CD8-positive, alpha-beta T cell (primary cell): ENCODE measurements at regions of chr2 and their contacts with region 1.

Region 1: DNA sequence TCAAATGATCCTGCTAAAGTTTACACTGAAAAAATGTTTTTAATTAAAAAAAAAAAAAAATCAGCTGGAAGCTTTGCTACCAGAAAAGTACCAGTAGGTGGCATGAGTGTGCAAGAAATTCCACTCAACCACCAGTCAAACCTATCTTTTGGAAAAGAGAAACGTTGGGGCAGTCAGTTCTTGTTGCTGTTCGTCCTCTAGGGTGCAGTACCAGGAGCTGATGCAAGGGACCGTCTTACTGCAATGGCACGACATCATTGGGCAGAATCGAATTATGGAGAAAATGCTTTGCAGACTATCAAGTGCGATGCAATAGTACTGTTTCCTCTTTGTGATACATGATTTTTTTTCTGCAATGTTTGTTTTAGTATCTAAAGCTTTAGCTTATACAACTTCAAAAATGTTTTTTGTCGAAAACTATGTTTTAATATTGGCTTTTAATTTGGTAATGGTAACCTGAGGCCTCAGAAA is 18.3 kb downstream of the YPEL5 start:
- DNase-seq: peak in 8 of 9 experiments; percentile 28 to 90 (median 60)
- ATAC-seq: peak; percentile 83
- H3K4me3 ChIP-seq: no peak overlapping the region
- H3K4me3 Mint-ChIP-seq: no peak overlapping the region
- H3K27ac ChIP-seq: no peak overlapping the region
- H3K27ac Mint-ChIP-seq: no peak overlapping the region
- H3K4me1 ChIP-seq: no peaks in the 10 kb centered on the region
- H3K4me1 Mint-ChIP-seq: peaks cover 5% of the 10 kb centered on the region
- H3K27me3 ChIP-seq: no peaks in the 10 kb centered on the region
- H3K27me3 Mint-ChIP-seq: no peaks in the 10 kb centered on the region
- CTCF ChIP-seq: peak; percentile 93

Region 2: GRCh38 chr2:30146438-30147147 is 18.5 kb before region 1 on chr2 and contains the start of gene YPEL5:
- CTCF ChIA-PET with region 1: interaction called, 83 read pairs
- POLR2A ChIA-PET with region 1: interaction called, 41 read pairs
- intact Hi-C with region 1: no loop called
- DNase-seq: peak; percentile 99 to 100 (median 100)
- ATAC-seq: peak; percentile 82
- H3K4me3 ChIP-seq: peak within 1 kb of the TSS; percentile 75 to 76
- H3K4me3 Mint-ChIP-seq: peak within 1 kb of the TSS; percentile 89
- H3K27ac ChIP-seq: peak within 1 kb of the TSS; percentile 97 to 100
- H3K27ac Mint-ChIP-seq: peak within 1 kb of the TSS; percentile 100
- H3K4me1 ChIP-seq: peaks cover 50% of the 10 kb centered on the region
- H3K4me1 Mint-ChIP-seq: peaks cover 60% of the 10 kb centered on the region
- H3K27me3 ChIP-seq: no peaks in the 10 kb centered on the region
- H3K27me3 Mint-ChIP-seq: no peaks in the 10 kb centered on the region
- CTCF ChIP-seq: no peak
- total RNA-seq, gene YPEL5: 1,051 to 1,071 TPM

Region 3: DNA sequence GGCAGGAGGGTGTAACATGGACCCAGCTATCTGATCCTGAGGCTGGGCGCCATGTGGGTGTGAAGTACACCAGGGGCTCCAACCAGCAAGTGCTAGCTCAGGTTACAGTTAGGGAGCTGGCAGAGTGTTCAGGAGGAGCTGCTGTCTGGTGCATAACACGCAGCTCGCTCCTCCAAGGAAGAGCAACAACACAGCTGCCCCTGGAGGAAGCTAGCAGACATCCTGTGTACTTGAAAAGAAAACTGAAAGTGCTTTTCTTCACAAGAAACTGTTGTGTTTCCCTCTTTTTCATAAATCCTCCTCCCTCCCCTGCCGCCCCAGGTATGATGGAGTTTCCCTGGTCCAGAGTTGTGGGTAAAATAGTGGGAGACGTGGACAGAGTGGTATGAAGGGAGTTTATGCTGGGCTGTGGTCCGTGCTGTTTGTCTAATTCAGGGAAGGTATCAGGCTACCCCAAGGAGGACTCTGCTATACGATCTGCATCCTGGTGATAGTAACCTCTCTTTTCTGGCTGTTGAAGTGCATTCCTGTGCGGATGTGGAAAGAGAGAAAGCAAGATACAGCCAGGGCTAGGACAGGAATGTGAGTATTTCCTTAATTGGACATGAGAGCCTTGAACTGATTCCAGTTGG is 60.2 kb after region 1 on chr2:
- CTCF ChIA-PET with region 1: interaction called, 22 read pairs
- POLR2A ChIA-PET with region 1: interaction called, 5 read pairs
- intact Hi-C with region 1: loop called (anchors 5 kb)
- DNase-seq: peak in 8 of 9 experiments; percentile 37 to 86 (median 57)
- ATAC-seq: peak; percentile 68
- H3K4me3 ChIP-seq: peak overlapping the region; percentile 59 to 61
- H3K4me3 Mint-ChIP-seq: peak overlapping the region; percentile 99
- H3K27ac ChIP-seq: peak overlapping the region; percentile 78 to 93
- H3K27ac Mint-ChIP-seq: peak overlapping the region; percentile 100
- H3K4me1 ChIP-seq: peaks cover 76% of the 10 kb centered on the region
- H3K4me1 Mint-ChIP-seq: peaks cover 83% of the 10 kb centered on the region
- H3K27me3 ChIP-seq: no peaks in the 10 kb centered on the region
- H3K27me3 Mint-ChIP-seq: no peaks in the 10 kb centered on the region
- CTCF ChIP-seq: no peak

Region 4: GRCh38 chr2:30239308-30239985 is 74.4 kb after region 1 on chr2:
- CTCF ChIA-PET with region 1: interaction called, 26 read pairs
- POLR2A ChIA-PET with region 1: interaction called, 6 read pairs
- intact Hi-C with region 1: loop called (anchors 5 kb)
- DNase-seq: peak; percentile 48 to 91 (median 79)
- ATAC-seq: peak; percentile 73
- H3K4me3 ChIP-seq: peak overlapping the region; percentile 11 to 39
- H3K4me3 Mint-ChIP-seq: peak overlapping the region; percentile 94
- H3K27ac ChIP-seq: peak overlapping the region; percentile 24 to 60
- H3K27ac Mint-ChIP-seq: peak overlapping the region; percentile 96
- H3K4me1 ChIP-seq: peaks cover 90% of the 10 kb centered on the region
- H3K4me1 Mint-ChIP-seq: peaks cover 88% of the 10 kb centered on the region
- H3K27me3 ChIP-seq: no peaks in the 10 kb centered on the region
- H3K27me3 Mint-ChIP-seq: no peaks in the 10 kb centered on the region
- CTCF ChIP-seq: peak; percentile 95

Region 5: GRCh38 chr2:30472326-30472725 is 307.2 kb after region 1 on chr2:
- CTCF ChIA-PET with region 1: interaction called, 12 read pairs
- POLR2A ChIA-PET with region 1: interaction called, 3 read pairs
- intact Hi-C with region 1: loop called (anchors 1 to 5 kb)
- DNase-seq: no peak
- ATAC-seq: no peak
- H3K4me3 ChIP-seq: no peak overlapping the region
- H3K4me3 Mint-ChIP-seq: no peak overlapping the region
- H3K27ac ChIP-seq: no peak overlapping the region
- H3K27ac Mint-ChIP-seq: no peak overlapping the region
- H3K4me1 ChIP-seq: peaks cover 14% of the 10 kb centered on the region
- H3K4me1 Mint-ChIP-seq: peaks cover 49% of the 10 kb centered on the region
- H3K27me3 ChIP-seq: no peaks in the 10 kb centered on the region
- H3K27me3 Mint-ChIP-seq: no peaks in the 10 kb centered on the region
- CTCF ChIP-seq: no peak

Region 6: DNA sequence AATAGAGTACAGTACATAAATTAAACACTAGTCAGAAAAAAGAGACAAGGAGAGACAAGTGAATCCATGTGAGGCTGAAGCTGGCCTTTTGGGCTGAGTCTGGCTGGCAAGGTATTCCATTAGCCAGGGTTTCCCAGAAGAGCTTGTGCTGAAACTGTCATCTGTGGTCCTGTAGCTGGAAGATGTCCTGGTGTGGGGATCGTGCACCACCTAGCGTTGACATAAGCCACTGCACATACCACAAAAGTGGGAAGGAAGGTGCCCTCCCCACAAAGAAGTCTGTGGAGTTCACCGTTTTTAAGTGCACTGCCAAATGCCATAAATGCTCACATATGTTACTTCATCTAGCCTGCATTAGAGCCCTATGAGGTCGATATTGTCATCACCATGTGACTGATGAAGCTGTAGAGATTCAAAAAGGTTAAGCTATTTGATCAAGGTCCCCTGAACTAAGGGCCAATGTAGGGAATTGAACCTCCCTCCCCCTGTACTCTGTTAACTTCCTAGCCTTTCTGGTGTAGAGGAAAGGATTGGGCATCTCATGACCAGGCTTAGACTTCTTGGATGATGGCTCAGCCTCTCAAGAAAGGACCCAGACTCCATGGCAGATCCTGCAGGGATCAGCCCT is 1005.1 kb after region 1 on chr2:
- CTCF ChIA-PET with region 1: interaction called, 8 read pairs
- POLR2A ChIA-PET with region 1: no interaction called
- intact Hi-C with region 1: loop called in 1 of 2 experiments (anchors 10 kb)
- DNase-seq: peak in 8 of 9 experiments; percentile 18 to 69 (median 40)
- ATAC-seq: peak; percentile 58
- H3K4me3 ChIP-seq: no peak overlapping the region
- H3K4me3 Mint-ChIP-seq: no peak overlapping the region
- H3K27ac ChIP-seq: no peak overlapping the region
- H3K27ac Mint-ChIP-seq: no peak overlapping the region
- H3K4me1 ChIP-seq: no peaks in the 10 kb centered on the region
- H3K4me1 Mint-ChIP-seq: no peaks in the 10 kb centered on the region
- H3K27me3 ChIP-seq: no peaks in the 10 kb centered on the region
- H3K27me3 Mint-ChIP-seq: no peaks in the 10 kb centered on the region
- CTCF ChIP-seq: peak; percentile 80